ENCODE measurements at regions of chr16 and their contacts with region 1.

Region 1: GRCh38 chr16:68902008-68902968 is 59.0 kb downstream of the TANGO6 start:
- H3K4me3 Mint-ChIP-seq: no peak overlapping the region
- H3K27ac Mint-ChIP-seq: no peak overlapping the region
- H3K4me1 Mint-ChIP-seq: no peaks in the 10 kb centered on the region
- H3K27me3 Mint-ChIP-seq: no peaks in the 10 kb centered on the region

Region 2: GRCh38 chr16:69089091-69089910 is 187.0 kb after region 1 on chr16:
- intact Hi-C with region 1: no loop called
- H3K4me3 Mint-ChIP-seq: no peak overlapping the region
- H3K27ac Mint-ChIP-seq: no peak overlapping the region
- H3K4me1 Mint-ChIP-seq: peaks cover 21% of the 10 kb centered on the region
- H3K27me3 Mint-ChIP-seq: no peaks in the 10 kb centered on the region

Region 3: GRCh38 chr16:69123910-69124309 is 221.6 kb after region 1 on chr16:
- intact Hi-C with region 1: loop called (anchors 2 kb)
- H3K4me3 Mint-ChIP-seq: no peak overlapping the region
- H3K27ac Mint-ChIP-seq: no peak overlapping the region
- H3K4me1 Mint-ChIP-seq: peaks cover 12% of the 10 kb centered on the region
- H3K27me3 Mint-ChIP-seq: no peaks in the 10 kb centered on the region